Panc1 (cell line): ENCODE measurements at regions of chr4 and their contacts with region 1.

Region 1: GRCh38 chr4:4640692-4641091 is 98.8 kb upstream of the STX18 start:
- DNase-seq: no peak
- ATAC-seq: peak; percentile 58; the same call in 1 of the 2 replicates
- H3K4me3 ChIP-seq: no peak overlapping the region
- H3K27ac ChIP-seq: no peak overlapping the region
- H3K4me1 ChIP-seq: peaks cover 6% of the 10 kb centered on the region; the same call in 1 of the 2 replicates
- H3K27me3 ChIP-seq: no peaks in the 10 kb centered on the region
- CTCF ChIP-seq: no peak

Region 2: GRCh38 chr4:4780729-4781244 is 140.1 kb after region 1 on chr4:
- CTCF ChIA-PET with region 1: no interaction called
- POLR2A ChIA-PET with region 1: interaction called, 26 read pairs
- in situ Hi-C with region 1: no loop called
- intact Hi-C with region 1: no loop called
- DNase-seq: no peak
- ATAC-seq: no peak
- H3K4me3 ChIP-seq: no peak overlapping the region
- H3K27ac ChIP-seq: no peak overlapping the region
- H3K4me1 ChIP-seq: no peaks in the 10 kb centered on the region
- H3K27me3 ChIP-seq: no peaks in the 10 kb centered on the region
- CTCF ChIP-seq: no peak